ENCODE measurements at regions of chr1 and their contacts with region 1.

Region 1: DNA sequence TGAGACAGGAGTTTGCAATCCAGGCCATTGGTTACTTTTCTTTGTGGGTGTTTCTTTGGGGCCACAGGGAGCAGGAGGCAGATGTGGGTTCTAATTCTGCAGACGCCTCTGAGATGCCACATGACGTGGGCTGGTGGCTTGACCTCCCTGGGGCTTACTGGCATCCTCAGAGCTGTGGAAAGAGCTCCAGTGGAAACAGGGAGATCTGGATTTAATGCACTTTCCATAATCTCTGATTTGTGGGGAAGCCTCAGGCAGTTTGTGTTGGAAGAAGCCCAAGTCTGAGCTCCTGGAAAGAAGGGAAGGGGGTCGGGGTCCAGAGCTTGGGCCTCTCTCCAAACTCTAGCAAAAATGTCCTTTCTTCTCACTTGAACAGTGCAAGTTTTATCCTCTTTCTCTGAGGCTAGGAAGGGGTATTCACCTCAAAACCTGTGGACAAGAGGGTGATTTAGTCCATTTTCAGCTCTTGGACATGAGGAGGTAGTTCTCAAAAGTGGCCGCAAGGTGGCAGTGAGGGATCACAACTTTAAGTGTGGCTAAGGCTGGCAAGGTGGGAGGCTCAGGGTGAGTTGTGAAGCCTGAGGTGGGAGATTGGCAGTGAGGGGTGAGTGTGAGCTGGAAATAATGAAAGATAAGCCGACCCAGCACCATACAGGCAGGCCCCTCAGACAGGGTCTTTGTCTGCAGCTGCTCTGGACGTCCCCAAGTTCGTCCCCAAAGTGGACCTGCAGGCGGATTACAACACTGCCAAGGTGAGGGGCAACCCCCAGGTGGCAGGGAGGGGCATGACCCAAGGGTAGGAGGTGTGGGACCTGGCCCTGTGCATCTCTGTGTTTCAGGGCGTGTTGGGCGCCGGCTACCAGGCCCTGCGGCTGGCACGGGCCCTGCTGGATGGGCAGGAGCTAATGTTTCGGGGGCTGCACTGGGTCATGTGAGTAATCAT is 9.2 kb downstream of the IKBKE start:
- DNase-seq: no peak
- H3K4me3 ChIP-seq: no peak overlapping the region
- CTCF ChIP-seq: peak; percentile 70

Region 2: GRCh38 chr1:206461602-206462455 is 17.6 kb before region 1 on chr1:
- CTCF ChIA-PET with region 1: interaction called, 92 read pairs
- POLR2A ChIA-PET with region 1: no interaction called
- DNase-seq: no peak
- H3K4me3 ChIP-seq: no peak overlapping the region
- CTCF ChIP-seq: peak; percentile 62

Region 3: GRCh38 chr1:206590025-206590758 is 110.7 kb after region 1 on chr1:
- CTCF ChIA-PET with region 1: interaction called, 79 read pairs
- POLR2A ChIA-PET with region 1: no interaction called
- DNase-seq: peak; percentile 41
- H3K4me3 ChIP-seq: no peak overlapping the region
- CTCF ChIP-seq: no peak

Region 4: DNA sequence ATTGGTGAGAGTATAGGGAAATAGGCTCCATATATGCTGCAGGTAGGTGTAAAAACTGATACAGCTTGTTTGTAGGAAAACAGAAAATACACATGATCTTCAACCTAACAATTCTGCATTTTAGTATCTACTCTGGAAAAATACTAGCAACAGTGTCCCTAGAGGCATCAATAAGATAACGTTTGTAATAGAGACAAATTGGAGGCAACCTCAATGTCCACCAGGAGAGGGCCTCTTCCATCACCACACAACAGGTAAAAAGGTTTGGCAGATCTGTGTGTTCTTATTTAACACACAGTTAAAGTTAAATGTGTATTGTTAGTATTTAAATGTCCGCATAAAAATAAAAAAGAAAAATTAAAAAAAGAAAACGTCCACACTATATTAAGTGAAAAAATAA is 127.4 kb after region 1 on chr1:
- CTCF ChIA-PET with region 1: interaction called, 11 read pairs
- POLR2A ChIA-PET with region 1: no interaction called
- DNase-seq: no peak
- H3K4me3 ChIP-seq: no peak overlapping the region
- CTCF ChIP-seq: peak; percentile 53

Region 5: DNA sequence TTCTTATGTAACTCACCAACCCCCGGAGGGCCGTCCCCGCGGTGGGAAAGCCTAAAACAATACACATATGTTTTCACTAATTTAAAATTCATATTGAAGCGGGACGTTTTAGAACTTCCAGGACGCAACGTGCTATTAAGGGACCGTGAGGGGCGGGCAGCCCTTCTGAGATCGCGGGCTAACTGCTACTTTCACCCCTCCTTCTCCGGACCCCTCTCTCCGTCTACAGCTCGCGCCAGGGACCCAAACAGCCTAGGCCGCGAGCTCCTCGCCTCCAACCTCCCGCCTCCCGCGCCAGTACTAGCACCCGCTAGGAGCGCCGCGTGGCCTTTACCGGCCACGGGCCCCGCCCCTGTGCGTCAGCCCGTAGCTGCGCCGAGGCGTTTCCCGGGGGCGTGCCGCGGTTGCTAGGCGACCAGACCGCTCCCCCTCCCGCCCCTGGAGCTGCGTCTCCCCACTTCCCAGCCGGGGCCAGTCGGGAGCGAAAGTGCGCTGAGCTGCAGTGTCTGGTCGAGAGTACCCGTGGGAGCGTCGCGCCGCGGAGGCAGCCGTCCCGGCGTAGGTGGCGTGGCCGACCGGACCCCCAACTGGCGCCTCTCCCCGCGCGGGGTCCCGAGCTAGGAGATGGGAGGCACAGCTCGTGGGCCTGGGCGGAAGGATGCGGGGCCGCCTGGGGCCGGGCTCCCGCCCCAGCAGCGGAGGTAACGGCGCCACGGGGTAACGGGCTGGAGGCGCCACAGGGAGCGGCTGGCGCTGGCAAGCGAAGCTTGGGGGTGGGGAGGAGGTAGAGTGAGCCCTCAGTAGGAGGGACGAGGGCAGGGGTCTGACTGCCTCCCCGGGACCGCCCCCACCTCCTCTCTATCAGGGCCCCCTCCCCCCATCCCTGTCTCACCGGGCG is 155.9 kb after region 1 on chr1 and contains the start of gene DYRK3:
- CTCF ChIA-PET with region 1: interaction called, 13 read pairs
- POLR2A ChIA-PET with region 1: interaction called, 3 read pairs
- DNase-seq: no peak
- H3K4me3 ChIP-seq: peak within 1 kb of the TSS; percentile 86
- CTCF ChIP-seq: no peak